Activated B cell treated with CpG ODN at 0.5 μM for 24 hours (primary cell): ENCODE measurements at regions of chr4 and their contacts with region 1.

Region 1: DNA sequence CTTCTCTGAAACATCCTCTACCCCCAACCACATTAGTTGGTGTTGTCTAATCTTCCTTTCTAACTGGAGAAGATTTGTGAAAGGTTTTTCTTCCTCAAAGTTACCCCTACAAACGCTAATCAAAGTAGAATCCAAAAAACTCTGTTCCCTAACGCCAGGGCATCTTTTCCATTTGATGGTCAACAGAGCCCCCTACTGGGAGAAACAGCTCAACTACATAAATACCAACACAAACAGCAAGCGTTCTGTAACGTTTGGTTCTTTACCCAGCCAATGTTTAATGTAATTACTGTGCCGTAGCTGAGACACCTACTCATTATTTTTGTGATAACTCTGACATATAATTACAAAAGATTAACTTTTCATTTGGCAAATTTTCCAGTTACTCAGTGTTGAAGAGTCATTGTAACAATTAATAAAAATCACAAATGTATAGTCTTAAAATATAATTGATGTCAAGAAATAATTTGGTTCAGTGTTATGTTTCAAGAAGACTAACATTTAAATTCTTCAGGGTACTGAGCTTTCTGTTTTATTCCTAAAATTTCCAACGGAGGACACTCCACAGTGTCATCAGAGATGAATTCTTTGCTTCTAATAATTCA is 94.9 kb upstream of the TBC1D9 start:
- DNase-seq: no peak
- ATAC-seq: peak; percentile 88
- H3K4me3 Mint-ChIP-seq: no peak overlapping the region
- H3K27ac Mint-ChIP-seq: peak overlapping the region; percentile 55
- H3K4me1 Mint-ChIP-seq: peaks cover 24% of the 10 kb centered on the region
- H3K27me3 Mint-ChIP-seq: no peaks in the 10 kb centered on the region
- CTCF ChIP-seq: no peak

Region 2: DNA sequence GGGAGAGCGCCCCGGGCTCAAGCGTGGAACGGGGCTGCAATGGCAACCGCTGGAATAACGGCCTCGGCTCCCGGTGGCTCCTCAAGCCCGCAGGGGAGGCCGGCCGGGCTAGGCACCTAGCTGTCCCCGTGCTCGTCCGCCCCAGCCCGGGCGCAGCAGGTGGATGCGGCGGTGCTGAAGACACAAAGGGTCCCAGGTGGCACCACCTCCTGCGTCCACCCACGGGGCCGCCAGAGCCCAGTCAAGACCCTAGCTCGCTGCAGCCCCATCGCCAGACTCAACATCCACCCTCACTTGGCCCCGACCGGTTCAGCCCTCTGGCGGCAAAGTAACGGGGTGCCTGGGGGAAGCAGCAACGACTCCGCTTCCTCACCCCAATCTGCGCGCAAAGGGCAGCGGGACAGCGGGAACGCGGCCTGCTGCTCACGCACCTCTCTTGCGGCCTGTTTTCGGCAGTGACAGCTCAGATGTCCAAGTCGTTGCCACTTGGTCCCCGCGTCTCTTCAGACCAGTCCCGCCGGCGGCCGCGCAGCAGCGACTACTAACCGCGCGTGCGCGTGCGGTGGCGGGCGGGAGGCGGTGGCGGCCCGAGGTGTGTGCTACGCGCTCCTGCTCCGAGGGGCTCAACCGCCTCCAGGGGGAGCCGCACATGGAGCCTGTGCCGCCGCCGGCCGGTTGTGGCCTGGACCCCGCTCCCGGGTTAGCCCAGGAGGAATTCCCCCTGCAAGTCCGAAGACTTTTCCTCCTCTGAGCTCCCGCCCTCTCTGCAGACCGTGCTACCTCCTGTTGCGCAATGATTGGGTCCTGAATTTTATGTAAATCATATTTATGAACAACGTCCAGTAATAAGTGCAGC is 423.8 kb before region 1 on chr4 and contains the start of gene CLGN:
- CTCF ChIA-PET with region 1: interaction called, 6 read pairs
- POLR2A ChIA-PET with region 1: no interaction called
- intact Hi-C with region 1: loop called (anchors 5 kb)
- DNase-seq: peak; percentile 58
- ATAC-seq: peak; percentile 91
- H3K4me3 Mint-ChIP-seq: peak within 1 kb of the TSS; percentile 85
- H3K27ac Mint-ChIP-seq: no peak within 1 kb of the TSS
- H3K4me1 Mint-ChIP-seq: peaks cover 12% of the 10 kb centered on the region
- H3K27me3 Mint-ChIP-seq: peaks cover 48% of the 10 kb centered on the region
- CTCF ChIP-seq: no peak
- total RNA-seq, gene CLGN: not detected in 2 replicates

Region 3: DNA sequence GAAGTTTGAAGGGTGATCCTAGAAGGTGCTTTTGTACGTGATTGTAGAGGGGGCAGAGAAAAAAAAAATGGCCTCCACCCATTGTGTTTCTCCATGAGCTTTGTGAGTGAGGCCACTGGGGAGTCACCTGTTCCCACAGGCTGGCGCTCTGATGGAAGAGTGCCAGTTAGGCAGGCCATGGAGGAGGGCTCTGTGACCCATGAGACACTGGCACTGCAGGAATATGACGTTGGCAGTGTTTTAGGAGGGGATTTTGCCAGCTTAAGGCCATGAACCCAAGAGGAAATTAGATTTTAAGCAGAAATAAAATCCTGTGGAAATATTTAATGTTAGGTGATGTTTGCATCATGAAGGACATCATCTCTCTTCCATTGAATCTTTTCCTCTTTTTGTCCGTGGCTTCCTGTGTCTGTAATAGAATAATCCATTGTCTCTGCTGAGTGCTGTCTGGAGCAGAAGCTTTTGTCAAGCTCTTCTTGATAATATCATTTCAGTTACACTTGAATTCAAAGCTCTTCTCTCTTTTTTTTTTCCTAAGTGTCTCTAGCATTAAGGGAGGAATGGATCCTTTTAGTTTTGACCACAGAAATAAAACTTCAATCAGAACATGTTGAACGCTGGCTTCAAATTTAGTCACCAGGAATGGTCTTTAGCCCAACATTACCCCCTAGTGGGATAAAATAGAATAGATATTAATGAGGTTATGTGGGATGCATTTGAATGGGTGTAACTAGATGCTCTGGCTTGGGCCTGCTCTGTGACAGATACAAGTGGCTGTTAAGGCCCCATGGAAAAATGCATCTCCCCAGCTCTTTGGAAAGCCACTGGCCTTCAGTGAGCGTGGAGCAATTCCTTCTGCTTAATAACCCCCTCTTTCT is 241.3 kb before region 1 on chr4:
- CTCF ChIA-PET with region 1: interaction called, 5 read pairs
- POLR2A ChIA-PET with region 1: no interaction called
- intact Hi-C with region 1: loop called (anchors 1 kb)
- DNase-seq: no peak
- ATAC-seq: peak; percentile 83
- H3K4me3 Mint-ChIP-seq: no peak overlapping the region
- H3K27ac Mint-ChIP-seq: no peak overlapping the region
- H3K4me1 Mint-ChIP-seq: peaks cover 12% of the 10 kb centered on the region
- H3K27me3 Mint-ChIP-seq: peaks cover 8% of the 10 kb centered on the region
- CTCF ChIP-seq: peak; percentile 49

Region 4: DNA sequence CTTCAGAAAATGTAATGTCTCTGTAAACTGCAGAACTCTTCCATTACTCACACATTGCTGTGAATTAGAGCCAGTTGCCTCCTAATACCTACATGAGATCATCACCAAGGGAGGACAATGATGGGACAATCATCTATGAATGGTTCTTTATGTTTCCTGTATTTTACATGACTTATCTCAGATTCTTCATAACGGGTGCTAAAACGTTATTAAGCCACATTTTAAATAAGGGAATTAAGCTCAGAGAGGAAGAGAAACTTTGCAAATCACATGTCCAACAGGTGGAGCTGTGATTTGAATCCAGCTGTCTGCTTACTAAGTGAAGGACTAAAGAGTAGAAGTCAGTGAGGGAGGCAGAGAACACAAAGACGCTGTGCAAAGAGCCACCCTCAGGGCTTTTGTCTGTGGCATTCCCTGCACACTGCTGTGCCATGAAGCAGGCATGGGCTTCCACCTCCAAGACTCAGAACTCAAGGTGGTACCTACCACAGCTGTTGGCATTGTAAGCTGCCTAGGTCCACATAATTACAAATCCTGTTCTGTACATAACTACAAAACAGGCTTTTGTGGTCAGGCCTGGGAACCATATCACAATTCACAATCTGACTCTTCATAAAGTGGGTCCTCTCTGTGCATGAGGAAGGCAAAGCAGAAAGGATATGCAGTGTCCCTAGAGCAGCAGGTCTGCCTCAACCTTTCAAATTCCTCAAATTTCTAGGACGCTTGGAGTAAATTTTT is 107.8 kb before region 1 on chr4:
- CTCF ChIA-PET with region 1: interaction called, 20 read pairs
- POLR2A ChIA-PET with region 1: interaction called, 10 read pairs
- intact Hi-C with region 1: loop called (anchors 1 kb)
- DNase-seq: no peak
- ATAC-seq: peak; percentile 77
- H3K4me3 Mint-ChIP-seq: peak overlapping the region; percentile 80
- H3K27ac Mint-ChIP-seq: peak overlapping the region; percentile 97
- H3K4me1 Mint-ChIP-seq: peaks cover 88% of the 10 kb centered on the region
- H3K27me3 Mint-ChIP-seq: no peaks in the 10 kb centered on the region
- CTCF ChIP-seq: no peak

Region 5: DNA sequence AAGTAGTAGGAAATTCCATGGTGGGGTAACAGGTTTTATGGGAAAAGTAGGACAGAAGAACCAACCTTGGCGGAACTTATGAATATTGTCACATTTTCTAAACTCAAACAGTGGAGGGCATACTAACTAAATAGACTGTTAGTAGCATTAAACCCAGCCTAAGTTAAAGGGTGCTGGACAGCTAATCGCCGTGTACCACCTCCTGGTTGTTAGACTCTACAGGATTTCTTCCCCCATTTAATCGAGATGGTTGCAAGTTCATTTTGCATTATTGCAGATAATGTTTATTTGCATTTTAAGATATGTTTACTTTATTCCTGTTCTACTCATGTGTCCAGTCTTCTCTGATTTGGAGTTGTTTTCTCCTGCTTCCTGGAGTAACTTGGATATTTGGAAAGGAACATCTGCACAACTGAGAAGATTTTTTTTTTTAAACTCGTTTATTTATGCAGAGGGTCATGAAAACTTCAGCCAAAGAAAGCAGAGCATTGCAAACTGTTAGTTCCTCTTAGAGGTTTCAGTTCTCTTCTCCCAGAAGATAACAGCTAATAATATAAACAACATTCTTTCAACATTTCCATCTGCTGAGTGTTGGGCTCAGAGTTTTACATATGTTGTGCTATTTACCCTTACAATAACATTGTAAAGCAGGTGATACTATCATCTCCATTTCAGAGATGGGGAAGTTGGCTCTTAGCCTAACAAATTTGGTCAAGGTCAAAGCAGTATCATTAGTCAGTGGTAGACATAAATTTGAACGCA is 43.5 kb before region 1 on chr4:
- CTCF ChIA-PET with region 1: interaction called, 5 read pairs
- POLR2A ChIA-PET with region 1: interaction called, 10 read pairs
- intact Hi-C with region 1: loop called (anchors 1 kb)
- DNase-seq: no peak
- ATAC-seq: peak; percentile 78
- H3K4me3 Mint-ChIP-seq: peak overlapping the region; percentile 72
- H3K27ac Mint-ChIP-seq: peak overlapping the region; percentile 93
- H3K4me1 Mint-ChIP-seq: peaks cover 89% of the 10 kb centered on the region
- H3K27me3 Mint-ChIP-seq: no peaks in the 10 kb centered on the region
- CTCF ChIP-seq: no peak

Region 6: DNA sequence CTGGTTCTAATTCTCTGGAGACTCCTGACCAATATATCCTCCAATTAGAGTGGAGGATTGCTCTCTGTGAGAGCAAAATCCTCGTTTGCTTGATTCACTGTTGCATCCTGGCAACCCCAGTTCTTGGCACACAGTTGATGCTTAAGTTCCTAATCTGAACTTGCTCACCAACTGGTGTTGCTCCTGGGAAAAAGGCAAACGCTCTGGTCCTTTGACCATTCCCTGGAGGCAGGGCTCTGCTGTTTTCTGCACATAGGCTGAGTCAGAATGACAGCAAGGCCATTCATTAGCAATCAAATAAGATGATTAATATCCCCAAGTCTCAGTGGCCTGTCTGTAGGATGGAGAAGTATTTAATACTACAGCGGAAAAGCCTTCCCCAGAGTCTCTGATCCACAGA is 77.7 kb after region 1 on chr4:
- CTCF ChIA-PET with region 1: no interaction called
- POLR2A ChIA-PET with region 1: no interaction called
- intact Hi-C with region 1: no loop called
- DNase-seq: no peak
- ATAC-seq: no peak
- H3K4me3 Mint-ChIP-seq: no peak overlapping the region
- H3K27ac Mint-ChIP-seq: no peak overlapping the region
- H3K4me1 Mint-ChIP-seq: no peaks in the 10 kb centered on the region
- H3K27me3 Mint-ChIP-seq: peaks cover 25% of the 10 kb centered on the region
- CTCF ChIP-seq: no peak